ENCODE measurements at regions of chr1 and their contacts with region 1.

Region 1: GRCh38 chr1:208245185-208245705 is 1.1 kb upstream of the PLXNA2 start:
- DNase-seq: peak; percentile 84 to 99 (median 86)
- ATAC-seq: peak; percentile 69
- H3K4me3 ChIP-seq: no peak overlapping the region
- H3K4me1 ChIP-seq: peaks cover 25% of the 10 kb centered on the region
- CTCF ChIP-seq: peak; percentile 37

Region 2: GRCh38 chr1:207997486-207998268 is 247.6 kb before region 1 on chr1:
- intact Hi-C with region 1: no loop called
- DNase-seq: peak in 2 of 3 donors; percentile 60 to 87
- ATAC-seq: peak; percentile 92
- H3K4me3 ChIP-seq: no peak overlapping the region
- H3K4me1 ChIP-seq: no peaks in the 10 kb centered on the region
- CTCF ChIP-seq: peak; percentile 76

Region 3: DNA sequence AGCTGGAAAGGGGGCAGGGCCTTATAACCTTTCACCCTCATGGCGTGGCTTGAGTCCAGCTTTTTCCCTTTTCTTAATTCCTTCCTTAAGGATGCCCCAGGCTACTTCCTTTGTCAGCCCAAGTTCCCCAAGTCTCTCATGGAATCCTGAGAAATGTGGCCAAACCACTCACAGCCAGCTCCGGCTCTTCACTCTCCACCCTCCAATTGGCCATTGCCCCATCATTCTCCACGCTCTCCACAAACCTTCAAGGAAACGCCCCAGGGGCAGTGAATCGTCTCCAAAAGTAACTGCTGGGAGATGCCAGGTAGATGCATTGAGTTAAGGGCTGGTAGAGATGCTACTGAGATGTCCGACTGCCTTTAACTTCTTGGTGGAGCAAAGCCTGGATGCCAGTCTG is 220.8 kb before region 1 on chr1:
- intact Hi-C with region 1: loop called (anchors 5 to 10 kb)
- DNase-seq: no peak
- ATAC-seq: no peak
- H3K4me3 ChIP-seq: no peak overlapping the region
- H3K4me1 ChIP-seq: peaks cover 6% of the 10 kb centered on the region
- CTCF ChIP-seq: no peak

Region 4: GRCh38 chr1:208029381-208030287 is 215.6 kb before region 1 on chr1:
- intact Hi-C with region 1: loop called (anchors 5 to 10 kb)
- DNase-seq: peak in 2 of 3 donors; percentile 23 to 44
- ATAC-seq: peak; percentile 84
- H3K4me3 ChIP-seq: no peak overlapping the region
- H3K4me1 ChIP-seq: peaks cover 20% of the 10 kb centered on the region
- CTCF ChIP-seq: no peak

Region 5: GRCh38 chr1:208132287-208132883 is 112.9 kb before region 1 on chr1:
- intact Hi-C with region 1: loop called in 1 of 2 experiments (anchors 10 kb)
- DNase-seq: peak; percentile 90 to 97 (median 95)
- ATAC-seq: peak; percentile 98
- H3K4me3 ChIP-seq: no peak overlapping the region
- H3K4me1 ChIP-seq: peaks cover 10% of the 10 kb centered on the region
- CTCF ChIP-seq: peak; percentile 86